ENCODE measurements at regions of chr15 and their contacts with region 1.

Region 1: GRCh38 chr15:78049691-78050440 is 27.6 kb downstream of the TBC1D2B start:
- DNase-seq: peak in 4 of 10 donors; percentile 44 to 52 (median 48)
- ATAC-seq: peak; percentile 56 to 70
- H3K4me3 Mint-ChIP-seq: peak overlapping the region; percentile 58 to 88 (median 76)
- H3K27ac Mint-ChIP-seq: peak overlapping the region; percentile 84 to 96 (median 94)
- H3K4me1 Mint-ChIP-seq: peaks cover 51 to 97% (median 95%) of the 10 kb centered on the region in 4 donors
- H3K27me3 Mint-ChIP-seq: no peaks in the 10 kb centered on the region

Region 2: GRCh38 chr15:78061963-78062435 is 12.1 kb after region 1 on chr15:
- POLR2A ChIA-PET with region 1: interaction called, 250 read pairs
- DNase-seq: peak in 4 of 10 donors; percentile 31 to 56 (median 40)
- ATAC-seq: peak; percentile 79 to 86
- H3K4me3 Mint-ChIP-seq: peak overlapping the region; percentile 68 to 92 (median 80)
- H3K27ac Mint-ChIP-seq: peak overlapping the region in 9 of 10 donors; percentile 82 to 96 (median 94)
- H3K4me1 Mint-ChIP-seq: peaks cover 37 to 49% (median 47%) of the 10 kb centered on the region in 4 donors
- H3K27me3 Mint-ChIP-seq: no peaks in the 10 kb centered on the region

Region 3: GRCh38 chr15:78077058-78077877 is 27.4 kb after region 1 on chr15 and contains the start of gene TBC1D2B:
- POLR2A ChIA-PET with region 1: interaction called, 250 read pairs
- DNase-seq: peak; percentile 53 to 83 (median 68)
- ATAC-seq: peak; percentile 82 to 89
- H3K4me3 Mint-ChIP-seq: peak within 1 kb of the TSS; percentile 95 to 100 (median 98)
- H3K27ac Mint-ChIP-seq: peak within 1 kb of the TSS; percentile 94 to 99 (median 96)
- H3K4me1 Mint-ChIP-seq: peaks cover 25 to 51% (median 49%) of the 10 kb centered on the region in 4 donors
- H3K27me3 Mint-ChIP-seq: no peaks in the 10 kb centered on the region
- polyA plus RNA-seq, gene TBC1D2B: 8.1 to 14.0 (median 8.5) TPM

Region 4: GRCh38 chr15:78405336-78405924 is 355.6 kb after region 1 on chr15:
- POLR2A ChIA-PET with region 1: no interaction called
- DNase-seq: no peak
- ATAC-seq: no peak
- H3K4me3 Mint-ChIP-seq: no peak overlapping the region
- H3K27ac Mint-ChIP-seq: no peak overlapping the region
- H3K4me1 Mint-ChIP-seq: no peaks in the 10 kb centered on the region
- H3K27me3 Mint-ChIP-seq: peaks cover 0 to 10% (median 2%) of the 10 kb centered on the region in 5 donors